K562 (cell line): ENCODE measurements at regions of chr22 and their contacts with region 1.

Region 1: DNA sequence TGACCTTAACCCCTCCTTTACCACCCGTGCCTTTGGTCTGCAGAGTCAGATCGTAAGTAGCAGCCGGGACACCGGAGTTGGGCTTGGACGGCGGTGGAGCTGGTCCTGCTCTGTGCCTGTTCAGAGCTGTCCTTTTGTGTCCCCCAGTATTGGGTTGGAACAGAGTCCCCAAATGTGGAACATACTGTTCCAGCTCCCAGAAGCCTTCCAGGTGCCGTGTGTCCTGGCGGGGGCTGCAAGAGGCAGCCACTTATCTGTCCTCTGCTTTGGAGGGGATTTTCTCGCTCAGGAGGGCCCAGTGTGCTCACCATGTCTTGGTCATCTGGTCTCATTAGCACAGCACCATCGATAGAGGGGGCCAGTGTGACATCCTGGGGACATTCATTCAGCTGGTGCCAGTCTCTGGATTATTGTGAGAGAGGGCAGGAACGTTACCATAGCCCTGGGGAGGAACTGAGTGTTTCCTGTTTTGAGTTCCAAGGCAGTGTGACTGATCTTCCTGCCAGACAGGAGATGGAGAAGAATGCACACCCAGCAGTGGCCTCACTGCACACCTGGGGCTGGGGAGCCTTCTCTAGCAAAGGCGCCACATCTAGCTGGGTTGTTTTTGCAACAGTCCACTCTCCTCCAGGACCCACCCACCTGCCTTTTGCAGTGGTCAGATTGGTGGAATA is 12.4 kb downstream of the CRELD2 start:
- DNase-seq: peak in 2 of 4 experiments; percentile 37 to 67
- ATAC-seq: peak; percentile 61
- H3K4me3 ChIP-seq: no peak overlapping the region
- H3K27ac ChIP-seq: no peak overlapping the region
- H3K4me1 ChIP-seq: peaks cover 15 to 51% of the 10 kb centered on the region in 2 experiments; a peak in 4 of 5 replicates
- H3K27me3 ChIP-seq: no peaks in the 10 kb centered on the region
- CTCF ChIP-seq: peak; percentile 64 to 79 (median 74)
- EP300 ChIP-seq: no peak
- POLR2A ChIP-seq: no peak
- RAD21 ChIP-seq: peak; percentile 54 to 80

Region 2: DNA sequence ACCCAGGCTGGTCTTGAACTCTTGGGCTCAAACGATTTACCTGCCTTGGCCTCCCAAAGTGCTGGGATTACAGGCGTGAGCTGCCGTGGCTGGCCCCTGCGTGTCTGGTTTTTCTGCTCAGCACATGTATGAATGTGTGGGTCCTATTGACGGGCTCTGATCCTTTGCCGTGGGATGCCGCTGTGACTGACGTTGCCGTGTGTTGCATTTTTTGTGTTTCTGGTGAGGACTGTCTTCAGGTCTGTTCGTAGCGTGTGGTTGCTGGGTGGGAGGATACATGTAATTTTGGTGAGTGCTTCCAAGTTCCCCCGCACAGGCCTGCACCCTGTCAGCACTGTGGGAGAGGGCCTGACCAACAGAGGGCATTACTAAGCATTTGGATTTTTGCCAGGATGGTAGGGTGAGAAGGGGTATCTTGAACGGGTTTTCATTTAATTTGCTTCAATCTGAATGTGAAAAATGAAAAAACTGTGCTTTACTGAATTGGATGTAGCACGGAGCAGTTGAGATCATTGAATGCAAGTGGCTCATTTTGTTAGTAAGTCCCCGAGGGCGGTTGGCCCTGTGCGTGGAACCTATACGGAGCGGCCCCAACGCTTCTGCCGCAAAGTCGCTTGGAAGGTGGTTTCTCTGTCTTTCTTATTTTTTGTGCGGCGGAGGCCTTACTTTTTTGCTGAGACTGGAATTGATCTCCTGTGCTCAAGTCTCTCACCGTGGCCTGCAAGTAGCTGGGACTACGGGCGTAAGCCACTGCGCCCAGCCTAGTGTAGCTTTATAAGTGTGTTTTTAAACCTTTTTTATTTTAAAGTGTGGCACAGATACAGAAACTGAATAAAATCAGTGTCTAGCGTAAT is 69.0 kb before region 1 on chr22:
- CTCF ChIA-PET with region 1: no interaction called
- POLR2A ChIA-PET with region 1: no interaction called
- in situ Hi-C with region 1: no loop called
- intact Hi-C with region 1: no loop called
- DNase-seq: no peak
- ATAC-seq: no peak
- H3K4me3 ChIP-seq: no peak overlapping the region
- H3K27ac ChIP-seq: no peak overlapping the region
- H3K4me1 ChIP-seq: peaks cover 0 to 8% of the 10 kb centered on the region in 2 experiments; a peak in 3 of 5 replicates
- H3K27me3 ChIP-seq: no peaks in the 10 kb centered on the region
- CTCF ChIP-seq: no peak
- EP300 ChIP-seq: no peak
- POLR2A ChIP-seq: no peak
- RAD21 ChIP-seq: no peak

Region 3: GRCh38 chr22:49970528-49971231 is 39.8 kb after region 1 on chr22:
- CTCF ChIA-PET with region 1: no interaction called
- POLR2A ChIA-PET with region 1: interaction called, 3 read pairs
- in situ Hi-C with region 1: no loop called
- intact Hi-C with region 1: loop called (anchors 5 kb)
- DNase-seq: peak; percentile 80 to 96 (median 84)
- ATAC-seq: peak; percentile 92
- H3K4me3 ChIP-seq: peak overlapping the region; percentile 40
- H3K27ac ChIP-seq: peak overlapping the region; percentile 90
- H3K4me1 ChIP-seq: peaks cover 25 to 83% of the 10 kb centered on the region in 2 experiments
- H3K27me3 ChIP-seq: no peaks in the 10 kb centered on the region; a peak in 1 of 5 replicates
- CTCF ChIP-seq: 0 out of 6 replicates have a peak, but pooled peaks of 1 of the 3 experiments have one; percentile 2
- EP300 ChIP-seq: peak; percentile 79
- POLR2A ChIP-seq: peak; percentile 74
- RAD21 ChIP-seq: 0 out of 4 replicates have a peak, but pooled peaks of 1 of the 2 experiments have one; percentile 11

Region 4: GRCh38 chr22:49992921-49993648 is 62.2 kb after region 1 on chr22:
- CTCF ChIA-PET with region 1: no interaction called
- POLR2A ChIA-PET with region 1: no interaction called
- in situ Hi-C with region 1: loop called (anchors 5 kb)
- intact Hi-C with region 1: no loop called
- DNase-seq: peak; percentile 49 to 65 (median 54)
- ATAC-seq: peak; percentile 97
- H3K4me3 ChIP-seq: no peak overlapping the region
- H3K27ac ChIP-seq: no peak overlapping the region
- H3K4me1 ChIP-seq: peaks cover 0 to 49% of the 10 kb centered on the region in 2 experiments; a peak in 3 of 5 replicates
- H3K27me3 ChIP-seq: no peaks in the 10 kb centered on the region
- CTCF ChIP-seq: peak; percentile 70 to 72 (median 71)
- EP300 ChIP-seq: no peak
- POLR2A ChIP-seq: no peak
- RAD21 ChIP-seq: peak; percentile 52 to 67

Region 5: DNA sequence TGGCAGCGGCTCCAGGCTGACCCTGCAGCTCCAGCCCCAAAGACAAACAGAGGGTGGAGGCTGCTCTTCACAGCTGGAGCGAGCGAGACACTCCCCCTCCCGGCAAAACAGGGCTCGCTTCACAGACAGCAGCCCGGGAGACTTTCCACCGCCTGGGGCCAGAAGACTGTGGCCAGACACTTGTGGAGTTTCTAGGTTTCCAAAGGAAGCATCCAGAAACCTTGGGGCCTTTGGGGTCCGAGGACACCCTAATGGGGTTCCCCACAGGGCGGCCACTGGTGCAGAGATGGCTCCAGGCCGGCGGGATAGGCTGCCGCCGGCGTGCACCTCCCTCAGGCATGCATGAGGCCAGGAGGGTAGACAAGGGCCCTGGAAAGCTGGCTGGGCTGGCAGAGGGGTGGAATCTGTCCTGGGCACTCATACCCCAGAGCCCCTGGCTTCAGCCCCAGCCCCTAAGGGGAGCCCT is 81.9 kb after region 1 on chr22 and contains the start of gene IL17REL:
- CTCF ChIA-PET with region 1: interaction called, 12 read pairs
- POLR2A ChIA-PET with region 1: no interaction called
- in situ Hi-C with region 1: no loop called
- intact Hi-C with region 1: no loop called
- DNase-seq: peak in 2 of 4 experiments; percentile 44 to 47
- ATAC-seq: peak; percentile 80
- H3K4me3 ChIP-seq: no peak within 1 kb of the TSS
- H3K27ac ChIP-seq: no peak within 1 kb of the TSS
- H3K4me1 ChIP-seq: peaks cover 0 to 72% of the 10 kb centered on the region in 2 experiments; a peak in 3 of 5 replicates
- H3K27me3 ChIP-seq: peaks cover 0 to 30% of the 10 kb centered on the region in 2 experiments; a peak in 2 of 5 replicates
- CTCF ChIP-seq: peak; percentile 23 to 49 (median 25); a peak in 2 of 6 replicates
- EP300 ChIP-seq: no peak
- POLR2A ChIP-seq: no peak
- RAD21 ChIP-seq: peak in 1 of 2 experiments; percentile 52; a peak in 2 of 4 replicates
- polyA plus RNA-seq, gene IL17REL: not detected

Region 6: GRCh38 chr22:50030297-50031188 is 99.7 kb after region 1 on chr22:
- CTCF ChIA-PET with region 1: interaction called, 37 read pairs
- POLR2A ChIA-PET with region 1: interaction called, 5 read pairs
- in situ Hi-C with region 1: loop called (anchors 5 kb)
- intact Hi-C with region 1: loop called (anchors 1 kb)
- DNase-seq: peak; percentile 82 to 85 (median 83)
- ATAC-seq: peak; percentile 99
- H3K4me3 ChIP-seq: no peak overlapping the region
- H3K27ac ChIP-seq: no peak overlapping the region
- H3K4me1 ChIP-seq: peaks cover 0 to 51% of the 10 kb centered on the region in 2 experiments; a peak in 2 of 5 replicates
- H3K27me3 ChIP-seq: peaks cover 8 to 71% of the 10 kb centered on the region in 2 experiments
- CTCF ChIP-seq: peak; percentile 77 to 96 (median 91)
- EP300 ChIP-seq: no peak
- POLR2A ChIP-seq: no peak
- RAD21 ChIP-seq: peak; percentile 90 to 97